A673 (cell line): ENCODE measurements at regions of chr10 and their contacts with region 1.

Region 1: GRCh38 chr10:23158370-23158769 is 33.7 kb upstream of the PTF1A start:
- DNase-seq: peak; percentile 80
- H3K4me3 ChIP-seq: peak overlapping the region; percentile 23
- H3K27ac ChIP-seq: no peak overlapping the region
- H3K4me1 ChIP-seq: peaks cover 9% of the 10 kb centered on the region
- H3K27me3 ChIP-seq: no peaks in the 10 kb centered on the region
- CTCF ChIP-seq: peak; percentile 75

Region 2: DNA sequence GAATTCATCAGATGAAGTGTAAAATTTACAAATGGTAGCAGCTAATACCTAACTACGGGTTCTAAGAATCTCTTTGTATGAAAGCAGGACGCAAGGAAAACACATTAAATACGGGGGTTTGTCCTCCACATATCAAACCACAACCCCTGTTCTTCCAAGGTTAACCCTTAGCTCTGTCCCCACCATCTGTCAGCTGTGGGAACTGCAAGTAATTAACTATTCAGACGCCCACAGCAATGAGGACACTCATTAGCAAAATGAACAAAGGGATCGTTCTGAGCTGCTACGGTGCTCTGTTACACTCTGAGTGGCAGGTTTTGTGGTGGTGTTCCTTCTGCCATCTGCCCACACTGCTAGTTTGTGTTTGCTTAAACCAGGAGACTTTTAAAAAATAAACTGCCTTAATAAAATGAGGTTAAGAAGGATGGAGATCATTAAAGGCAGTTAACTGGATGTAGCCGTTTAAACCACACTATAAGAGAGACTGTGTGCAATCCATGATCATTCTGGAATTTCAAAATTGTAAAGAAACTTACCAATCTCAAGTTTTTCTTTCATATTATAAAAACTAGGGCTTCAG is 134.9 kb after region 1 on chr10:
- CTCF ChIA-PET with region 1: interaction called, 26 read pairs
- POLR2A ChIA-PET with region 1: no interaction called
- intact Hi-C with region 1: loop called (anchors 1 kb)
- DNase-seq: peak; percentile 83
- H3K4me3 ChIP-seq: no peak overlapping the region
- H3K27ac ChIP-seq: no peak overlapping the region
- H3K4me1 ChIP-seq: peaks cover 7% of the 10 kb centered on the region
- H3K27me3 ChIP-seq: no peaks in the 10 kb centered on the region
- CTCF ChIP-seq: peak; percentile 83

Region 3: GRCh38 chr10:23525406-23525805 is 367.0 kb after region 1 on chr10:
- CTCF ChIA-PET with region 1: no interaction called
- POLR2A ChIA-PET with region 1: no interaction called
- intact Hi-C with region 1: loop called (anchors 2 kb)
- DNase-seq: peak; percentile 58
- H3K4me3 ChIP-seq: no peak overlapping the region
- H3K27ac ChIP-seq: no peak overlapping the region
- H3K4me1 ChIP-seq: peaks cover 16% of the 10 kb centered on the region
- H3K27me3 ChIP-seq: no peaks in the 10 kb centered on the region
- CTCF ChIP-seq: peak; percentile 64

Region 4: DNA sequence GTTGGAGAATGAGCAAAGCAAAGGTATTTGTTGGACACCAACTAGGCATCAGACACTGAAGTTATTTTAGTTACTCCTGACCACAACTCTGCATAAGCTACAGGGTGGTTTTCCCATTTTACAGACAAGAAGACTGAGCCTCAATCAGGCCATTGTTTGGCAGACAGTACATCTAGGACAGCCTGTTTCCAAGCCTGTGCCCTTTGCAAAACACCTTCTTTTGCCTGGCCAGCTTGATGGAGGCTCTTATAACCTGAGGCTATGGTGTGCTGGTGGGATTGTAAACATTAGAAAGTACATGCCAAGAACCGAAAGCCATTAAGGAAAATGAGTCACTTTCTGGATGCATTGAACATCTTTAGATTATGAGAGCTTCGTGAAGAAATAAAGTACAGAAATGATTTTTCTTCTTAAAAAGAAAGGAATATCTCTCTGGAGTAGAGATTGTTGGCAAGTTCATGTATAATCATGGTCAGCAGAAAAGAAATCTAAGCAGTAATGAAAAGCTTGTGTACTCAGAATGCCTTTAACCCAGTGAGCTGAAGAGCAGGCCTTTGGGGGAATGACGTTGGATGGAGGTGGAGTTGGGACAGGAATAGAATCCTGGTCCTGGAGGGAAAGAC is 1191.1 kb after region 1 on chr10:
- CTCF ChIA-PET with region 1: no interaction called
- POLR2A ChIA-PET with region 1: no interaction called
- intact Hi-C with region 1: loop called (anchors 10 kb)
- DNase-seq: no peak
- H3K4me3 ChIP-seq: no peak overlapping the region
- H3K27ac ChIP-seq: peak overlapping the region; percentile 86
- H3K4me1 ChIP-seq: peaks cover 83% of the 10 kb centered on the region
- H3K27me3 ChIP-seq: no peaks in the 10 kb centered on the region
- CTCF ChIP-seq: no peak

Region 5: DNA sequence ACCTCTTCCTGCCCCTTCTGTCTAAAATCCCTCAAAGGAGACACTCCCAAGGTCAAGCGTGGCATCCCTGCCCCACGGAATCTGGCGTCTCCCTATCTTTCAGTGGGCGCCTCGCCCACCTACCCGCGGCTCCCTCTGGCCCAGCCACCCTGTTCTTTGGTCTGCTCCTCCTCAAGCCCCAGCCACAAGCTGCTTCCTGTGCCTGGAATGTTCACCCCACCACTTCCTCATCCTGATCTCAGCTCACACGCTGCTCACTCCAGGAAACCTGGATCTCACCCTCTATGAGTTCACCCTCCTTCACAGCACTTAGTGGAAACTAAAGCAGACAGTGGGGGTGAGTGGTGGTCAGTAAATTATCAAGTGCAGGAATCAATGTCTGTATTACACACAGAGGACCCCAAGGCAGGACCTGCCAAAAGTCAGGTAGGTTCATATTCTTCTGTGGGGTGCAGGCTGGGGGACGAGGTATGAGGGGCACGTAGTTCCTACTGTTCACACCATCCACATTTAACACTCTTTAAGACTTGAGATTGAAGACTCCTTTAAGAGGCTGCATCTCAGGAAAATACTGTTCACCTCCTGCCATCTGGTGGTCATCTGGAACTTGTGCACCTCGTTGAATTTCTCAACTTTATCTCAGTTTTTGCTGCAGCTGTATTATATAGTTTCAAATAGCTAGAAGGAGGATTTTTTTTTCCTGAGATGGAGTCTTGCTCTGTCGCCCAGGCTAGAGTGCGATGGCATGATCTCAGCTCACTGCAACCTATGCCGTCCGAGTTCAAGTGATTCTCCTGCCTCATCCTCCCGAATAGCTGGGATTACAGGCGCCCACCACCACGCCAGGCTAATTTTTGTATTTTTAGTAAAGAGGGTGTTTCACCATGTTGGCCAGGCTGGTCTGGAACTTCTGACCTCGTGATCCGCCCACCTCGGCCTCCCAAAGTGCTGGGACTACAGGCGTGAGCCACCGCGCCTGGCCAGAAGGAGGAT is 1398.7 kb after region 1 on chr10:
- CTCF ChIA-PET with region 1: interaction called, 3 read pairs
- POLR2A ChIA-PET with region 1: no interaction called
- intact Hi-C with region 1: loop called (anchors 5 kb)
- DNase-seq: peak; percentile 85
- H3K4me3 ChIP-seq: no peak overlapping the region
- H3K27ac ChIP-seq: no peak overlapping the region
- H3K4me1 ChIP-seq: peaks cover 11% of the 10 kb centered on the region
- H3K27me3 ChIP-seq: no peaks in the 10 kb centered on the region
- CTCF ChIP-seq: peak; percentile 81